Activated T-helper 2 cell treated with anti-CD3 and anti-CD28 coated beads, Interferon-gamma antibody, Interleukin-2, Interleukin-4, amounts not matched to agents 10 μg/mL and 5 μg/mL and 100 μg/mL, durations not matched to agents 14 hours and 24 hours and 36 hours (primary cell): ENCODE measurements at regions of chr10 and their contacts with region 1.

Region 1: GRCh38 chr10:129971381-129972144 is 7.5 kb upstream of the EBF3 start:
- DNase-seq: no peak
- H3K4me3 Mint-ChIP-seq: peak overlapping the region; percentile 26
- H3K27ac Mint-ChIP-seq: no peak overlapping the region
- H3K4me1 Mint-ChIP-seq: peaks cover 4% of the 10 kb centered on the region
- H3K27me3 Mint-ChIP-seq: peaks cover 60% of the 10 kb centered on the region

Region 2: DNA sequence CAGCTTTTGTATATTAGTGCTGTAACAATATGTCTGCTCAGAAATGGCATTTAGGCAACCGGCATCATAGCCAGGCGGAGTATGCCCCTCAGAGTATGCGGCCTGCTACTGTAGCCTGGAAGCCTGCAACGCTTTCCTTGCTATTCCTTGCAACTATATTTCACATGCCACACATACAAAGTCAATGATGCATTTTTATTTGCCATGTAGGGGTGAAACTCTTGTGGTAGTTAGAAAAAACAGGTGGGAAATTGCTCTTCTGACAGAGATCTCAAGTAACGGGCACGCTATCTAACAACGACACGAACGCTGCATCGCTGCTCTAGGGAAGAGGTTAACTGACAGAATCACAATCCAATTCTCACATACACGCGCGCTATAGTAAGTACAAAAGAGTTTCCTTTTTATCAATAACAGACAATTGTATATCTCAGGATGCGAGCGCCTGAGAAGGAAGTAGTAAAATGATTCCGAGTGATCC is 13.4 kb before region 1 on chr10:
- intact Hi-C with region 1: loop called (anchors 1 kb)
- DNase-seq: no peak
- H3K4me3 Mint-ChIP-seq: no peak overlapping the region
- H3K27ac Mint-ChIP-seq: no peak overlapping the region
- H3K4me1 Mint-ChIP-seq: peaks cover 6% of the 10 kb centered on the region
- H3K27me3 Mint-ChIP-seq: peaks cover 66% of the 10 kb centered on the region

Region 3: GRCh38 chr10:130127364-130128061 is 155.9 kb after region 1 on chr10:
- intact Hi-C with region 1: loop called (anchors 5 kb)
- DNase-seq: peak; percentile 40
- H3K4me3 Mint-ChIP-seq: no peak overlapping the region
- H3K27ac Mint-ChIP-seq: no peak overlapping the region
- H3K4me1 Mint-ChIP-seq: peaks cover 7% of the 10 kb centered on the region
- H3K27me3 Mint-ChIP-seq: peaks cover 38% of the 10 kb centered on the region

Region 4: GRCh38 chr10:130179640-130180039 is 208.1 kb after region 1 on chr10:
- intact Hi-C with region 1: loop called (anchors 2 kb)
- DNase-seq: peak; percentile 33
- H3K4me3 Mint-ChIP-seq: no peak overlapping the region
- H3K27ac Mint-ChIP-seq: peak overlapping the region; percentile 79
- H3K4me1 Mint-ChIP-seq: peaks cover 22% of the 10 kb centered on the region
- H3K27me3 Mint-ChIP-seq: no peaks in the 10 kb centered on the region